PC-9 (cell line): ENCODE measurements at regions of chr12 and their contacts with region 1.

Region 1: DNA sequence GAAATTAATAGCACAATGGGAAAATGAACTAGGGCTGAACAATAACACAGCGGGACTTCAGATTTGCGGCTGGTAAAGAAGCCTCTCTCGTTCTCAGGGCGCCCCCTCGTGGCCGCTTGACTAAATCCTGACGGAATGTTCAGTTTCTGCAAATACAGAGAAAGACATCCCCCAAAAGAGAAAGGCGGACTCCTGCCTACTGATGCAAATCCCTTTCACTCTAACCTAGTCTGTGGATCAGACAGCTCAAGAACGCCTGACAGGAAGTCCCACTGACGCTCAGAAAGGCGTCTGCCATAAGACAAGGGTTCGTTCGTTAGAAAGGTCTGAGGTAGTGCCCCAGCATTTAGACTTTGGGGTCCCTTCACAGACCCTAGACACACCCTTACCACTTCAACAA is 2.5 kb downstream of the NUAK1 start:
- DNase-seq: peak; percentile 76 to 79
- H3K4me3 ChIP-seq: peak overlapping the region; percentile 78
- H3K27ac ChIP-seq: peak overlapping the region; percentile 11; the same call in 1 of the 2 replicates
- H3K4me1 ChIP-seq: peaks cover 69% of the 10 kb centered on the region
- H3K27me3 ChIP-seq: no peaks in the 10 kb centered on the region
- CTCF ChIP-seq: peak; percentile 96

Region 2: DNA sequence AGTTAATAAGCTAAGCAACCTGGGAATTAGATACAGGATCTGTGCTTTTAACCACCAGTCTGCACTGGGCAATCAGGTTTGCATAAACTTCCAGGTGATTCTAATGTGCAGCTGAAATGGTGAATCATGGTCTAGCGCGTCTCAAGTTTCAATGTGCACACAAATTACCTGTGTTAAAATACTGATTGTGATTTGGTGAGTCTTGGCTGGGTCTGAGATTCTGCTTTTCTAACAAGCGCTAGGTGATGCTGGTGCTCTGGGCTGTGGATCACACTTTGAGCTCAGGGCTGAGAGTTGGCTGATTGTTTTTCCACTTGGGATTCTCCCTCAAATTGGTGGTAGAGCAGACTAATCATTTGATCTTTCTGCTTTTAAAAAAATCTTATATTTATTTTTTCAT is 681.0 kb before region 1 on chr12:
- CTCF ChIA-PET with region 1: no interaction called
- POLR2A ChIA-PET with region 1: no interaction called
- intact Hi-C with region 1: loop called (anchors 1 kb)
- DNase-seq: peak; percentile 38 to 62
- H3K4me3 ChIP-seq: no peak overlapping the region
- H3K27ac ChIP-seq: no peak overlapping the region
- H3K4me1 ChIP-seq: 0 out of 2 replicates have a peak, but pooled peaks cover 6% of the 10 kb centered on the region
- H3K27me3 ChIP-seq: no peaks in the 10 kb centered on the region
- CTCF ChIP-seq: no peak

Region 3: DNA sequence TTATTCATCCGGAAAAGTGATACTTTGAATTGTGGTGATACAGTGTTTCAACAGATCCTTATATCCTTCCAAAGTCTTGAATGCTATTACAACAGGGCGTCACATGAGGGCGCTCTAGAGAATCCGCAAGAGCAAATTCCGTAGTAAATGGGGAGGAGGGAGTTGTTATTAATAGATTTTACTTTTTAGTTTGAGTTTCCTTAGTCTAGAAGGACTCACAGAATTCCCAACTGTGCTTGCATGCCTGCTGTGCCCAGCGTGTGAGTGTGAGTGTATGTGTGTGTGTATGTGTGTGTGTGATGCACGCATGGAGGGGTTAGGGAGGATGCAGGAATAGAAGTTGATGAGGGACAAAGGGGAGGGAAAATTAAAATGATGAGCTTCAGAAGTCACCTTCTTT is 430.5 kb before region 1 on chr12:
- CTCF ChIA-PET with region 1: no interaction called
- POLR2A ChIA-PET with region 1: no interaction called
- intact Hi-C with region 1: loop called (anchors 5 kb)
- DNase-seq: peak in 1 of 2 experiments; percentile 4
- H3K4me3 ChIP-seq: no peak overlapping the region
- H3K27ac ChIP-seq: no peak overlapping the region
- H3K4me1 ChIP-seq: peaks cover 17% of the 10 kb centered on the region
- H3K27me3 ChIP-seq: no peaks in the 10 kb centered on the region
- CTCF ChIP-seq: peak; percentile 78

Region 4: GRCh38 chr12:106030210-106031175 is 105.8 kb before region 1 on chr12:
- CTCF ChIA-PET with region 1: no interaction called
- POLR2A ChIA-PET with region 1: interaction called, 4 read pairs
- intact Hi-C with region 1: loop called (anchors 2 kb)
- DNase-seq: peak; percentile 53 to 89
- H3K4me3 ChIP-seq: peak overlapping the region; percentile 14; the same call in 1 of the 2 replicates
- H3K27ac ChIP-seq: peak overlapping the region; percentile 65
- H3K4me1 ChIP-seq: peaks cover 53% of the 10 kb centered on the region
- H3K27me3 ChIP-seq: no peaks in the 10 kb centered on the region
- CTCF ChIP-seq: no peak

Region 5: GRCh38 chr12:106205208-106206071 is 69.2 kb after region 1 on chr12:
- CTCF ChIA-PET with region 1: no interaction called
- POLR2A ChIA-PET with region 1: no interaction called
- intact Hi-C with region 1: loop called (anchors 5 kb)
- DNase-seq: peak; percentile 46 to 47
- H3K4me3 ChIP-seq: no peak overlapping the region
- H3K27ac ChIP-seq: no peak overlapping the region
- H3K4me1 ChIP-seq: no peaks in the 10 kb centered on the region
- H3K27me3 ChIP-seq: peaks cover 22% of the 10 kb centered on the region
- CTCF ChIP-seq: peak; percentile 50

Region 6: DNA sequence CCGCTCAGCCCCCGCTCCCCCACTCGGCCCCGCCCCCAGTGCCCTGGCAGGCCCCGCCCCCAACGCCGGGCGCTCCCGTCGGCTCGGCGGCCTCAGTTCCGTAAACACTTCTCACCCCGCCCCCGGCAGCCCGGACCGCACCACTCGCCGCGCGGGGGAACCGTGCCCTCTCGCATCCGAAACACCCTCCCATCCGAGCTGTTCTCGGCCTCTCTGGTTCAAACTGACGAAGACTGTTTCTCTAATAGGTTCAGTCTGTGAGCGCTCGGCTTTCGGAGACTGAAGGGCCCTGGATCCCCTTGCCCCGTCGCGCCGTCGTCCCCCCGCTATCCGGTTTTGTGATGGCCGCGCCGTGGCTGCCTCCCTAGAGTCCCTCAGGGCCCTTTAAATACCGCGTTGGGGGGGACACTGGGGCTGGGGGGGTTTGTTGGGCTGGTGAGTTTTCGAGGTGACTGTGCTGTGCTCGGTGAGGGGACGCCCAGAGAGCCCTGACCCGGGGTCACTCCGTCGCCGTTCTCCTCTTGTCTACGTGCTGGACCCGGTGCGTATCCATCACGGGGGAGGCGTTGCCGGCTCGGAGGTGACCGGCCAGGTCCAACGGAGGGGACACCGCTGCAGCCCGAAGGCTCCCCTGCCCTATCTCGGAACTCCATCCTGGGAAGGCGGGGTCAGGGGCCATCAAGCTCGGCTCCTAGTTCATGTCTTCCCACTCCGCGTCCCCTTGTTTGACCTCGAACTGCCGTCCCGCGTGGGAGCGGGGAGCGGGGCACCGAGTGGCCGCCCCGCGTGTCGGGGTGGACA is 166.3 kb after region 1 on chr12 and contains the start of gene TCP11L2:
- CTCF ChIA-PET with region 1: no interaction called
- POLR2A ChIA-PET with region 1: no interaction called
- intact Hi-C with region 1: loop called (anchors 10 kb)
- DNase-seq: peak; percentile 59 to 79
- H3K4me3 ChIP-seq: peak within 1 kb of the TSS; percentile 99
- H3K27ac ChIP-seq: peak within 1 kb of the TSS; percentile 96
- H3K4me1 ChIP-seq: peaks cover 66% of the 10 kb centered on the region
- H3K27me3 ChIP-seq: no peaks in the 10 kb centered on the region
- CTCF ChIP-seq: no peak
- total RNA-seq, gene TCP11L2: 34.6 and 35.1 TPM in 2 replicates

Region 7: DNA sequence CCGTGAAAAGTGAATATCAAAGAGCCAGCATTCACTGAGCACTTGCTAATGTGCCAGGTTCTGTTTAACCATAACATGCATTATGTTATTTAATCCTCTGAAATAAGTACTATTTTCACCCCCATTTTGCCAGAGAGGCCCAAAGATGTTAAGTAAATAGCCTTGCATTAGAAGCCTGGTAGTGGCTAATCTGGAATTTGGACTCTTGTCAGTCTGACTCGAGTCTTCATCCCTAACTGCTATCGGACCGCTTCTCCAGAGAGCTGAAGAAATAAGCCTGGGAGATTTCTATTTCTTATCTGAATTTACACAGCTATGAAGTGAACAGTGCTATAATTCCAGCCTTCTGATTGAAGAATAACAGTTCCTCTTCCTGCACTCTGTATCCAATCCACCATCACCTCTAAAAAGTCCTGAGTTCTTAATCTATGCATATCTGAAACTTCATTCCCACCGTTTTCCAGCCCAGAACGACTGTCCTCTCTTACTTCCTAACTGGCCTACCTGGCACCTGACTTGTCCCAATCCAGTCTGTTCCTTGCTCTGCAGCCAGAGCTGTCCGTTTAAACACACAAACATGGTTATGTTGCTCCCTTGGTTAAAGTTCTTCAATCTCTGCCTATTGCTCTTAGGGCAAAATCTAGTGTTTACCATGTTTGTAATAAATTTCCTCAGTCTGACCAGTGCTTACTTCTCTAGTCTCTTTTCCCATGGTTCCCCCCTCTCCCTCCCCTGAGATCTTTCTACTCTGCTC is 223.6 kb after region 1 on chr12:
- CTCF ChIA-PET with region 1: no interaction called
- POLR2A ChIA-PET with region 1: no interaction called
- intact Hi-C with region 1: no loop called
- DNase-seq: no peak
- H3K4me3 ChIP-seq: peak overlapping the region; percentile 66; the same call in 1 of the 2 replicates
- H3K27ac ChIP-seq: peak overlapping the region; percentile 95
- H3K4me1 ChIP-seq: peaks cover 30% of the 10 kb centered on the region
- H3K27me3 ChIP-seq: no peaks in the 10 kb centered on the region
- CTCF ChIP-seq: no peak